ENCODE measurements at regions of chr11 and their contacts with region 1.

Region 1: GRCh38 chr11:72040726-72041441 is 39.5 kb downstream of the NUMA1 start:
- DNase-seq: peak; percentile 82 to 97
- H3K4me3 ChIP-seq: peak overlapping the region; percentile 59 to 68
- H3K27ac ChIP-seq: peak overlapping the region; percentile 97
- H3K4me1 ChIP-seq: peaks cover 8 to 48% of the 10 kb centered on the region in 2 donors
- H3K27me3 ChIP-seq: no peaks in the 10 kb centered on the region
- CTCF ChIP-seq: no peak

Region 2: DNA sequence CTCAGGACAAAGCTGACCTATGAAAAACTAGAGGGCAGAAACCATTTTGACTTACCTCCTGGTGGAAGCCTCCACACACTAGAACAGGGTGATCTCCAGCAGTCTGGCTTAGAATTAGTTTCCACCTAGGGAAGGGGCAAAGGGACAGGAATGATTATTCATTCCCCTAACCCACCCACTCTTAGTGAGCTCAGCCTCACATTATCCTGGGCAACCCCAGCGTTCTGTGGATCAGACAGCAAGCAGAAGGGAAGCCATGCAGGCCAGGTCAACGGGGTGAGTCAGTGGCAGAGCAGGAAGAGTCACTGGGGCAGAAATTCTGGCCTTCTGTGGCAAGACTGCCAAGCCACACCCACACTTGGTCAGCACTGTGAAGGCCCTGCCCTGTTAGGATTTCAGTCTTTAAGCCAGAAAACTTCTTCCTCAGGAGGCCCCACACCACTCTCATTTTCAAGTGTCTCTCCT is 28.9 kb after region 1 on chr11:
- intact Hi-C with region 1: loop called (anchors 1 kb)
- DNase-seq: peak; percentile 74 to 95
- H3K4me3 ChIP-seq: peak overlapping the region; percentile 10 to 16
- H3K27ac ChIP-seq: peak overlapping the region; percentile 85 to 87
- H3K4me1 ChIP-seq: peaks cover 6 to 31% of the 10 kb centered on the region in 2 donors
- H3K27me3 ChIP-seq: no peaks in the 10 kb centered on the region
- CTCF ChIP-seq: no peak

Region 3: GRCh38 chr11:72102946-72103753 is 62.3 kb after region 1 on chr11 and contains the start of gene LAMTOR1:
- intact Hi-C with region 1: loop called (anchors 2 kb)
- DNase-seq: peak; percentile 97 to 100
- H3K4me3 ChIP-seq: peak within 1 kb of the TSS; percentile 78 to 80
- H3K27ac ChIP-seq: peak within 1 kb of the TSS; percentile 86 to 94
- H3K4me1 ChIP-seq: peaks cover 10 to 18% of the 10 kb centered on the region in 2 donors
- H3K27me3 ChIP-seq: no peaks in the 10 kb centered on the region
- CTCF ChIP-seq: peak; percentile 31 to 67 (median 58)
- total RNA-seq, gene LAMTOR1: 148 TPM

Region 4: GRCh38 chr11:72250661-72251465 is 210.0 kb after region 1 on chr11:
- intact Hi-C with region 1: no loop called
- DNase-seq: no peak
- H3K4me3 ChIP-seq: no peak overlapping the region
- H3K27ac ChIP-seq: no peak overlapping the region
- H3K4me1 ChIP-seq: no peaks in the 10 kb centered on the region
- H3K27me3 ChIP-seq: no peaks in the 10 kb centered on the region
- CTCF ChIP-seq: no peak

Measured in ascending aorta (tissue), 2 donors.